ENCODE measurements at regions of chr9 and their contacts with region 1.

Region 1: DNA sequence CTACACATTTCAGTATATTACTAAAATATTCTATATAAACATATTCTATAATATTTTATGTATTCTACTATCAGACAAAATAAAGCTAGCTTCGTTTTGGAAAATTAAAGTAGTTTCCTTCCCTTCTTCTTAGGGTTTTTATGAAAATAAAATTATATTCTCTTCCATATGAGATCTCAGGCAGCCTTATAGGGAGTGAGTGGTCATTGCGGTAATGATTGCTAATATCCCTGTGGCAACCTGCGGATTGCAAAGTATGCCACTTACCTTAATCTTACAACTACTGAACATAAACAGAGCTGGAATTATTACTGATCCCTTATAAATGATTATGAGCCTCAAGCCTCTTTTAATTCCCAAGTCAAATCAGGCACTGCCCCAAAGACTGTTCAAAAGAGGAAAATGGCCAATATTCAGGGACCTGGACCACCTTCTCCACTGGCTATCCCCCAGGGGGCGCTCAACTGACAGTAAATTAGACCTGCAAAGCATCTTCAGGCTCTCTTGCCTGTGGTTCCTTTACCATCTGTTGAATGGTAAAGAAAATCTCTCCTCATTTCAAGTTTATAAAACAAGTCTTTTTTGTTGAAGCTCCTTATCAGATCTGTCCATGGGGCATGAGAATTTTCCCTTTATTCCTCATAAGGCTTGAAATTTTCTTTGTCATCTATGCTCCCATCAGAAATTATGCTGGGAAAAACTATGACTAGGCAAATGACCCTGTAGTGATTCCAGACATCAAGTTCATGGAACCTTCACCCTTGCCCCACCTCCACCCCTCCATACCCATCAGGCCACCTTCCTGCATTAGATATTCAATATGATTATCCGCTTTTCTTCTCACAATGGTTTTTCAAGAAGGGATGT is 163.9 kb downstream of the CEMIP2 start:
- DNase-seq: peak; percentile 81
- H3K4me3 ChIP-seq: no peak overlapping the region
- H3K27ac ChIP-seq: no peak overlapping the region
- H3K4me1 ChIP-seq: no peaks in the 10 kb centered on the region
- H3K27me3 ChIP-seq: no peaks in the 10 kb centered on the region
- CTCF ChIP-seq: peak; percentile 72 to 81 (median 77)
- EP300 ChIP-seq: no peak
- POLR2A ChIP-seq: no peak

Region 2: GRCh38 chr9:71768388-71769174 is 164.2 kb after region 1 on chr9 and contains the start of gene CEMIP2:
- in situ Hi-C with region 1: loop called (anchors 10 to 25 kb)
- intact Hi-C with region 1: loop called (anchors 10 kb)
- DNase-seq: peak; percentile 94
- H3K4me3 ChIP-seq: peak within 1 kb of the TSS; percentile 70 to 96 (median 86)
- H3K27ac ChIP-seq: peak within 1 kb of the TSS; percentile 96 to 99 (median 96)
- H3K4me1 ChIP-seq: peaks cover 9 to 53% (median 41%) of the 10 kb centered on the region in 4 donors
- H3K27me3 ChIP-seq: no peaks in the 10 kb centered on the region
- CTCF ChIP-seq: peak in 3 of 5 experiments; percentile 20 to 62 (median 39)
- EP300 ChIP-seq: no peak
- POLR2A ChIP-seq: peak; percentile 96
- total RNA-seq, gene CEMIP2: 56.3 to 352 (median 236) TPM

Region 3: GRCh38 chr9:72022841-72023240 is 418.4 kb after region 1 on chr9:
- in situ Hi-C with region 1: loop called in 1 of 4 experiments (anchors 25 kb)
- intact Hi-C with region 1: no loop called
- DNase-seq: peak; percentile 25
- H3K4me3 ChIP-seq: no peak overlapping the region
- H3K27ac ChIP-seq: no peak overlapping the region
- H3K4me1 ChIP-seq: peaks cover 0 to 7% (median 3%) of the 10 kb centered on the region in 4 donors
- H3K27me3 ChIP-seq: no peaks in the 10 kb centered on the region
- CTCF ChIP-seq: no peak
- EP300 ChIP-seq: no peak
- POLR2A ChIP-seq: no peak